Prostate gland (tissue), 2 donors: ENCODE measurements at regions of chr7 and their contacts with region 1.

Region 1: DNA sequence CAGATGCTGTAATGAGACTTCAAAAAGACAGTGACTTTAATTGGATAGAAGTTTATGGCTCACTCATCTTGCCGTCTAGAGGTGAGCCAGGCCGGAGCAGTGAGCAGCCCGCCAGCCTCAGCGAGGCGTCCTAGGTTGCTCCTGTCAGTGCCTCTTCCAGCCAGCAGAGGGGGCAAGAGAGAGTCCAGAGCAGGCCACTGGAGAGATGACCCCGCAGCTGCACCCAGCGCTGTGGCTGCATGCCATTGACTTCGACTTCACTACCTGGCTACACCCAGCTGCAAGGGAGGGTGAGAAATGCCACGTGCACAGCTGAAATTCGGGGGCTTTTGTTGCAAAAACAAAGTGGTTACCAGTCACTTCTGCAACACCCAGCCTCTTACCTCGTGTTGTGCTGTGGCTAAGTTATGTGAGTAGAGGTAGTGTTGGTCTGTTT is 26.5 kb downstream of the NUB1 start:
- DNase-seq: peak; percentile 75
- H3K4me3 ChIP-seq: no peak overlapping the region
- H3K27ac ChIP-seq: no peak overlapping the region
- H3K4me1 ChIP-seq: no peaks in the 10 kb centered on the region
- H3K27me3 ChIP-seq: no peaks in the 10 kb centered on the region
- CTCF ChIP-seq: peak; percentile 69 to 95 (median 88)
- POLR2A ChIP-seq: no peak

Region 2: DNA sequence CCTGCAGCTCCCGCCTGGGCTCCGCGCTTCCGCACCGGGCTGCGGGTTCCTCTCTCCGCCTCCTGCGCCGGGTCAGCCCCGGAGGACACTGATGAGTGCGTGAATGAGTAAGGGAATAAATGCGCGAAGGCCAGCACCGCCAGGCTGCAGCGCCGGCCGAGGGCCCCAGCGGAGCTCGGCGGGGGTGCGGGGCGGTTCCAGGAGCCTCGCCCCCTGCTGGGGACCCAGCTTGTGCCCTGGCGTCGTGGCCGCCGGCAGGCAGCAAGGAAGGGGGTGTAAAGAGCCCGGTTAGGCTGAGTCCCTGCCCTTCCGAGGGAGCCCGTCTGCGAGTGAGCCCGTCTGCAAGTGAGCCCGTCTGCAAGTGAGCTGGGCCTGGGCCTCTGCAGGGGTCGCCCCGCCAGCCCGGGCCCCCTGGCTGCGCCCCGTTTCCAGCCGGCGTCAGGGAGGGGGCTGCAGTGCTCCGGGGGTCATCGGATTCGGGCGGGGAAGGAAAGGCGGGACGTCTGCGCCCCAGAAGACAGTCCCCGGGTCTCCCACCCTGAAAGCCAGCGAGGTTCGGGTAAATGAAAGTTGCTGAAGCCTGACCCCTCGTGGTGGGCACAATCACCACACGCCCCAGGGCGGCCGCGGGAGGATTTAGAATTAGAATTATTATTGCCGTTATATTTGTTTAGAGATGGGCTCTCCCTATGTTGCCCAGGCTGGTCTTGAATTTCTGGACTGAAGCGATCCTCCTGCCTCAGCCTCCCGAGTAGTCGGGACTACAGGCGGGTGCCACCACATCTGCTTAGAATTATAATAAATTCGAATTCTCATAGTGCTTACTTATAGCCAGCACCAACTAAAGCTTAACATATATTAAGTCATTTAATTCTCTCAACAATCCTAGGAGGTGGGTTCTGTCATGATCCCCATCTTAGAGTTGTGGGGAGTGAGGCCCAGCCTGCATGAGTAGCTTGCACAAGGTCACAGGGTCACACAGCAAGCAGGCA is 80.4 kb after region 1 on chr7:
- intact Hi-C with region 1: loop called (anchors 1 kb)
- DNase-seq: peak; percentile 56
- H3K4me3 ChIP-seq: peak overlapping the region; percentile 27 to 41
- H3K27ac ChIP-seq: peak overlapping the region in 1 of 2 donors; percentile 17
- H3K4me1 ChIP-seq: no peaks in the 10 kb centered on the region
- H3K27me3 ChIP-seq: no peaks in the 10 kb centered on the region
- CTCF ChIP-seq: peak; percentile 60 to 83 (median 73)
- POLR2A ChIP-seq: no peak